Activated CD8-positive, alpha-beta T cell treated with anti-CD3 and anti-CD28 coated beads for 36 hours (primary cell): ENCODE measurements at regions of chr4 and their contacts with region 1.

Region 1: DNA sequence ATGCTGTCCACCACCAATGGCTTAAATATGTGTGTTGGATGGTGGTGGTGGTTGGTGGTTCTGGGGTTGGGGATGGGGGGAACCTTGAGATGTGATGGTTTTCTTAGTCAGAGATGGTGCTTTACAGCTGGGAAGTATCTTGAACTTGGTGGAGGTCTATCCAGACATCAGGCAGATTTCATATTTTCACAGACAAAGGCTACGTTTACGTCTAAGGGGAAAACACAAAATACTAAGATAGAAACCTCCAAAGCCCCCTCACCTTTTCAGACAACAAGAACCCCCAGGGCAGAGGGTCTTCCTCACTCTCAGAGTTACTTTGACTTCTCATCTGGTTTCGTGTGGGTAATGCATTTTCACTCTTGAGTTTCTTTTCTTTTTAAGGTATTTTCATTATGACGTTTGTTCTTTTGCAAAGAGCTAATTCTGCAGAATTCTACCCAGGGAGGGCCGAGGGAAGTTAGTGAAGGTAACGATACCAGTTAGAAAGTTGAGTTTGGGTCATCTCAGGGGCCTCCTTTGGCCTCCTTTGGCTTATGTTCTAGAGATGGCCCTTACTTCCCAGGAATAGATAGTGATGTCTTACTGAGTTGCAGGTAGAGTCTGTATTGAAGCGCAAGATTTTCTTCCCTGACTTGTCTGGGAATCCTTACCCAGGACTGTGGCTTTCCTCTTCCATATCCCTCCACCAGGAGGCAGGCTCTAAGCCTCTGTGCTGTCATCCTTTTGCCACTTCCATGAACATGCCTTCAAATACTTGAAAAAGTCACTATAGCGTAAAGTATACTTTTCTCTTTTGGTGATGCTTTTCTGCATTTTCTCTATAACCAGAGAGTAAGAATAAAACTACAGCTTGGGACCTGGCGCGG is 31.9 kb downstream of the RHOH start:
- DNase-seq: peak; percentile 74
- ATAC-seq: peak; percentile 35
- H3K4me3 Mint-ChIP-seq: peak overlapping the region; percentile 64
- H3K27ac Mint-ChIP-seq: peak overlapping the region; percentile 96
- H3K4me1 Mint-ChIP-seq: peaks cover 86% of the 10 kb centered on the region
- H3K27me3 Mint-ChIP-seq: no peaks in the 10 kb centered on the region
- CTCF ChIP-seq: peak; percentile 70

Region 2: DNA sequence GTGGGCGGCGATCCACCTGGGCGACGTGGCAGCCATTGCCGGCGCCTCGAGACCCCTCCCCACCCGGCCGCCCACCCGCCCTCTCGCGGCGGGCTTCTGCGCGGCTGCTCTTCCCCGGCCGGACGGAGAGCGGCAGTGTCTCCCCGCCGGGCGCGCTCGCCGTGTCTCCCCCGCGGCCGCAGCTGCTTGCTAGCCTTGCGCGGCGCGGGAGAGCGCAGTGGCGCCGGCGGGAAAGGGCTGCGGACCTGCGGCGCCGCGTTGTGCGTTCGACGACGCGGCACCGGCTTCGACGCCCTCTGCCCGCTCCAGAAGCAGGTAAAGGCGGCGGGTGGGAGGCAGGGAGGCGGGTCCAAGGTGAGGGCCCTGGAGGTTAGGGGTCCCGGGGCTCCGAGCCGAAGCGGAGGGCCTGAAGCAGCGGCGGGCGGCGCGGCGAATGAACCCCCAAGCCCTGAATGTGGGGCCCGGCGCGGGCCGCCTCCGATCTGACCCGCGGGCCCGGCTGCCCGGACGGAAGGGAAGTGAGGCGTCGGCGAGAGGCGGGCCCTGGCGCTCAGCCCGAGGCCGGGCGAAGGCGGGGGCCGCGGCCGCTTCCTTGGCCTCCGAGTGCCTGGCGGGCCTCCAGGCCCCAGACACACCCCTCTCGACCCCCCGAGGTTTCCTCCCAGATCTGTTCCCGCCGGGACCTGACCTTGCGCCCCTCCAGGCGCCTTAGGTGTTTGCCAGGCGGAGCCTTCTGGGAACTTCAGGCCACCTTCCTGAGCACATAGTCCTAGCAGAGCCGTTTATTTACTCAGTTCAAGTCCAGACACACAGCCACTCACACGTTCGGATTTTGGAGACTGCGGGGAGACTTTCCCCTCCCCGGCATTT is 171.8 kb before region 1 on chr4 and contains the start of gene N4BP2:
- CTCF ChIA-PET with region 1: interaction called, 5 read pairs
- POLR2A ChIA-PET with region 1: interaction called, 7 read pairs
- intact Hi-C with region 1: loop called (anchors 5 kb)
- DNase-seq: peak; percentile 77
- ATAC-seq: peak; percentile 59
- H3K4me3 Mint-ChIP-seq: peak within 1 kb of the TSS; percentile 96
- H3K27ac Mint-ChIP-seq: peak within 1 kb of the TSS; percentile 97
- H3K4me1 Mint-ChIP-seq: peaks cover 32% of the 10 kb centered on the region
- H3K27me3 Mint-ChIP-seq: peaks cover 6% of the 10 kb centered on the region
- CTCF ChIP-seq: peak; percentile 75
- total RNA-seq, gene N4BP2: 17.4 to 17.5 TPM

Region 3: DNA sequence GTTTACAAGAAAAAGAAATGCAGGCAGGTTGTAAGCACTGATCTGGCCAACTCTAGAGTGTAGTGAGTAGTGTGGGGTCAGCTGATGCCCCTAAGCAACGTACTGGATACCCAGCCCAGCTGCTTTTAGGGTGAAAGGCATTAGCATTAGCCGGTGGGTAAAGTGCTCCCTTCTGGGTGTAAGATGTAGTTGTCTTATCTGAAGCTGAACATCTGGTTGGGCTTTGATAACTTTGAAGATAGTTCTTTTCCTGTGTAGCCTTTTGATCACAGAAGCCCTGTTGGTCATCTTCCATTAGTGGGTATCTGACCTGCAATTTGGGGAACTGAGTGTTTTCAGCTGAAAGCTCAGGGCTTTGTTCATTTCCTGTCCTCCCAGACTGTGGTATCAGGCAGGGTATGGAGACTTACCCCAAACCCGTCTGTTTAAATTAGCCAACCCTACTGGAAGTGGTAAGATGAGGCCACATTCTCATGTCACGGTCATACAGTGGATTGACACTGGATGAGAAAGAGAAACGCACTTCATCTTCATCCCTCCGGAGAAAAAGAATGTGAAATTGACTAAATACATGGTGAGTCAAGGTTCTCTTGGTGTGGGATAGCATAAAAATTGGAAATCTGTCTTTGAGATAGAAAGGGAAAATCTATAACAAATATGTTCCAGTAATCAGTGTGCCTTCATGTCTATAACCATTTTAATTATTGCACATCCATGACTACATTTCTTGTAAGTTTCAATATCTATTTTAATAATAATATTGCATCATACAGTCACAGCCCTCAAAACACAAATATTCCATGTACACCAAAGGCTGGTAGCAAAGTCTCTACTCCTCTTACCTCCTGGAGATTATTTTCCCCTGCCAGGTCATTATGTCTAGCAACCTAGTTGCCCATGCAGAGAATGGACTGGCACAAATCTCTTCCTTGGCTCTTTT is 23.2 kb before region 1 on chr4:
- CTCF ChIA-PET with region 1: interaction called, 97 read pairs
- POLR2A ChIA-PET with region 1: interaction called, 295 read pairs
- intact Hi-C with region 1: loop called (anchors 2 kb)
- DNase-seq: peak; percentile 65
- ATAC-seq: peak; percentile 52
- H3K4me3 Mint-ChIP-seq: peak overlapping the region; percentile 99
- H3K27ac Mint-ChIP-seq: peak overlapping the region; percentile 99
- H3K4me1 Mint-ChIP-seq: peaks cover 35% of the 10 kb centered on the region
- H3K27me3 Mint-ChIP-seq: no peaks in the 10 kb centered on the region
- CTCF ChIP-seq: no peak

Region 4: DNA sequence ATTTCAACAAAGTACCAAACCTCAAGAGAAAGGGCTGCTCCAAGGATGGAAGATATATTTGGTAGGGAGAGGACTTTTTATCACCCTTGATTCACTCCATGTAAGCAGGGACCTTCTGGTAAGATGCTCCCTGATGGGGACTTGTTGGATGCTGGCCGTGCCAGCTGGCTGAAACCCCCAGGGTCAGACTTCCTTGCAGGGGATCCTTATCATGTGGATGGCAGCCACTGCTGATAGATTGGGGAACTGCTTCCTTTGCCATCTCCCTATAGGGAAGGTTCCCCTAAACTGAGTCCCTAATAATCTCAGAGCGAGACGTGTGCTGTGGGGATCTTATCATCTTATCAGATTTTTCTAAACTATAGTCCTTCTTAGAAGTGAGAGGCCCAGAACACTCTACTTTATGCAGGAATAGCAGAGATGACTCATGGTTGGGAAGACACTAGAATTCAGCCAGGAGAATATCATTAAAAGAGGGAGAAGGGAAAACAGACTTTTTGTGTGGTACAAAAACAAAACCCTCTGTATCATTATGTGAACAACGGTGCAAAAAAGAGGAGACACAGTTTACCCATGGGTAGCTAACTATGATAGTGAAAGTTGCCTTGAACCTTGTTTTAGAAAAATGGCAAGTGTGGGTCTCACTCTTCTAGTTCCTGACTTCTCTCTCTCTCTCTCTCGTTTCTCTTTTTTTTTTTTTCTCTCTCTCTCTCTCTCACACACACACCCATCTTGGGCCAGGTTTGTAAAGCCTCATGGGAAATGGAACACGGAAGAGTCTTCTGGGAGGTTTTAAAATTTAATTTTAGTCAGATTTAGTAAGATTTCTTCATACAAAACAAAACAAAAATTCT is 15.8 kb before region 1 on chr4:
- CTCF ChIA-PET with region 1: interaction called, 97 read pairs
- POLR2A ChIA-PET with region 1: interaction called, 167 read pairs
- intact Hi-C with region 1: no loop called
- DNase-seq: peak; percentile 4
- ATAC-seq: peak; percentile 24
- H3K4me3 Mint-ChIP-seq: peak overlapping the region; percentile 99
- H3K27ac Mint-ChIP-seq: peak overlapping the region; percentile 96
- H3K4me1 Mint-ChIP-seq: peaks cover 74% of the 10 kb centered on the region
- H3K27me3 Mint-ChIP-seq: no peaks in the 10 kb centered on the region
- CTCF ChIP-seq: no peak

Region 5: DNA sequence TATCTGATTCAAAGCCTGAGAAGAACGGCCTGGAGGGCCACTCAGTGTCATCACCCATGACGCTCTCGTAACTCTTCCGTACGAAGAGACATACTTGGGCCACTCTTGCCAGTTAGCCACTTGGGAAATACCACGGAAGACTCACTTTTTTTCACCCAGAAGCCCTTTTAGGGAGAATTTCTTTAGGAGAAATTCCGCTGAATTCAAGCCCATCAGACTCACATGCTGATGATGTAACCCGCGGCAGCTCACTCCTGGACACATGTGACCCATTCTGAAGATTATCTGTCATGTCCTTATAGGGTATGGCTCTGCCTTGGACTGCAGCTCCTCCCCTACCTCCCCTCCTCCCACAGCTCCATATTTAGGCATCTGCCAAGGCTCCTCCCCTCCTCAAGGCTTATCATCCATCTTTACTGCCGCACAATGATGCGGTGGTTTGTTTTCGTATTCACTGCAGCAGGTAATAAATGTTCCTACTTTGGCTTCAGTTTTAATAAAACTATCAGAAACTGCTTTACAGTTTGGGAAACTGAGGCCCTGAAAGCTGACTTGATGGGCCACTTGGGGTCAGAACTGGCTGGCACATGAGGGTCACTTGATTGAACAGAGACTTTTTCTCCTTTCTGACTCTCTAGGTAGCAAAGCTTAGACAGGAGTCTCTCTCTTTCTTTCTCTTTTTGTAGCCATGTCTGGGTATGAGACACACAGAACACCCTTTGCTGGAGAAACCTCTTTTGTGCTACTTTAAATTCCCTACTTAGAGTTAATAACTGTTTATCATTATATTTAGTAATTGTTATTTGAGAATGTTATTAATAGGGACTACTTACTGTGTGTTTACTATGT is 10.2 kb after region 1 on chr4:
- CTCF ChIA-PET with region 1: interaction called, 13 read pairs
- POLR2A ChIA-PET with region 1: interaction called, 128 read pairs
- intact Hi-C with region 1: no loop called
- DNase-seq: peak; percentile 93
- ATAC-seq: peak; percentile 90
- H3K4me3 Mint-ChIP-seq: peak overlapping the region; percentile 81
- H3K27ac Mint-ChIP-seq: peak overlapping the region; percentile 96
- H3K4me1 Mint-ChIP-seq: peaks cover 82% of the 10 kb centered on the region
- H3K27me3 Mint-ChIP-seq: no peaks in the 10 kb centered on the region
- CTCF ChIP-seq: no peak

Region 6: DNA sequence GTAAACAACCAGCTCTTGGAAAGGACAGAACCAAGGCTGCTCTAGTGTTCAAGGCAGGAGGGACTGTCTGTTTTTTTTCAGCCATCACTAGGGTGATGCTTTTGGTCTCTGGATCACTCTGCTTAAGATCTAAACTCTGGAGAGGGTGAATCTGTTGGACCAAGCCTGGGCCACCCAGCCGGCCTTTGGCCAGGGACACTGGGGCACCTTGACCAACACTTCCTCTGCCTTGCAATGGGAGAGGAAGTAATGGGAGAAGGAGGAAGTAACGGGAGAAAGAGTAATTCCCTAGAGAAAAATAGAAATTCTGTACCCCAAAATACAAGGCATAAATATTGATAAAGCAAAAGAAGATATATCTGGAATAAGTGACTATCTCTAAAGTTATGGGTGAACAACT is 119.3 kb after region 1 on chr4:
- CTCF ChIA-PET with region 1: no interaction called
- POLR2A ChIA-PET with region 1: no interaction called
- intact Hi-C with region 1: no loop called
- DNase-seq: no peak
- ATAC-seq: no peak
- H3K4me3 Mint-ChIP-seq: no peak overlapping the region
- H3K27ac Mint-ChIP-seq: no peak overlapping the region
- H3K4me1 Mint-ChIP-seq: peaks cover 6% of the 10 kb centered on the region
- H3K27me3 Mint-ChIP-seq: no peaks in the 10 kb centered on the region
- CTCF ChIP-seq: no peak